Activated CD4-positive, alpha-beta T cell treated with anti-CD3 and anti-CD28 coated beads for 36 hours (primary cell): ENCODE measurements at regions of chr7 and their contacts with region 1.

Region 1: DNA sequence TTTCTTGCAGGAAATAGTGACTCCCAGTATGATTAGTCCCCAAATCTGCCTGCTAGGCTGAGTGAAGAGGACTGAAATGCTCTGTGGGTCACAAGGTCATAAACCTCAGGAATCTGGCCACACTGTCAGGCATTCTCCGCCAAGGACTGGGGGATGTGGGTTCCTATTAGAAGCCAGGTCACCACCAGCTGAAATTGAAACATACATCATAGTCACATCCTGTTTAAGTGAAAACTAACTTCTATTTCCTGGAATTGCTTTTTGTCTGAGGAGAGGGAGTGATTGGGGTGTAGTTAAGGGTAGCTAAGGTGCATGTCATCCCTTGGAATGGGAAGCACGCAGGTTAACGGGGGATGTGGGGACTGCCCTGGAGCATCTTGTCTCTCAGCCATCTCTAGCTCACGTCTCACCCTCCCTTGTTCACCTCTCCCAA is 11.9 kb upstream of the GSAP start:
- DNase-seq: peak; percentile 28
- ATAC-seq: peak; percentile 88
- H3K4me3 Mint-ChIP-seq: no peak overlapping the region
- H3K27ac Mint-ChIP-seq: peak overlapping the region; percentile 59
- H3K4me1 Mint-ChIP-seq: peaks cover 27% of the 10 kb centered on the region
- H3K27me3 Mint-ChIP-seq: peaks cover 2% of the 10 kb centered on the region

Region 2: DNA sequence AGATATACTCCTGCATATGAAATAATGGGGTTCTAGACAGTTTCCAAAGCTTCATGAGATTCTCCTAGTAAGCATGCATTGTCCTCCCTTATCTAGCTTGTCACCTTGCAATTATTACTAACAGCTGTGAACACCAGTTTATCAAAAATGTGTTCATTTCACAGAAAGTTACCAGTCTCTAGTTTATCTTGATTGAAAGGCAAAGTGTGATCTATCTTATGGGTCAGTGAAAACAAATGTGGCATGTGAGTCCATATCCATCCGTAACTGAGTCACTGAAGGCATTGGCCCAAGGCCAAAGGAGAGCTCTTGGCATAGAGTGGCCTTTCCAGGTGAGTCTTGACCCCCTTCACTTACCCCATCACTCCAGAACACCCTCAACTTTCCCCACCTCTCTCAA is 65.2 kb before region 1 on chr7:
- CTCF ChIA-PET with region 1: no interaction called
- POLR2A ChIA-PET with region 1: no interaction called
- intact Hi-C with region 1: no loop called
- DNase-seq: no peak
- ATAC-seq: no peak
- H3K4me3 Mint-ChIP-seq: no peak overlapping the region
- H3K27ac Mint-ChIP-seq: no peak overlapping the region
- H3K4me1 Mint-ChIP-seq: no peaks in the 10 kb centered on the region
- H3K27me3 Mint-ChIP-seq: no peaks in the 10 kb centered on the region

Region 3: DNA sequence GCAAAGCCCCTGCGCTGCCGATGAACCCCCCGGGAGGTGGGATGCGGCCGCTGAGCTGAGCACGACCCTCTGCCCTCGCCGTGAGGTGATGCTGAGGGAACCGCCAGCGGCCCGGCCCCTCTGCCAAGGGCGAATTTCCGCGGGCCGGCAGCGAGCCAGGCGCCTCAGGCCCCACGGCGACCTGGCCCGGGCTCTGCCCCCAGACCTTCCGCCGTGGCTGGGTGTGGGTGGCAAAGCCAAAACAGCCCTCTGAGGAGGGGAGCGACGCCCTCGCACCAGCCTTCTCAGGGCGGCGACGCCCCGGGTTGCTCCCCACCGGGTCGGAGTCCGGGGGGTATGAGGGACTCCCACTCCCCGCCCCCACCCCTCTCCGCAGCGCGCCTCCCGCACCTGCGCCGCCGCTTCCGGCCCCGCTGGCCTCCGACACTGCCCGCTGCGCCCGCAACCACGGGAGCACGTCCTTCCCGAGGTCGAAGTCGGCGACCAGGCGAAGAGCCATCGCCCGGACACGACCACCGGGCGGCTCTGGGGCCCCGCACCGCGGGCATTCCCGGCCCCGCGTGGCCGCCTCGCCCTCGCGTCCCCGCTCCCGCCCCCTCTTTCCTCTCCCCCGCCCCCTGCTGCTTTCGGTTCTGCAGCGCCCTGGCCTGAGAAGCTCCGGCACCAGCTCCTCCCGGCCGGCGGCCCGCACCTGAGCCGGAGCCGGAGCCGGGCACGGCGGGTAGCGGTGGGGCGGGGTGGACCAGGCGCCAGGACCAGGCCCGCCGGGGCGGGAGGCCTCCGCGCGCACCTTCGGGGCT is 12.0 kb before region 1 on chr7 and contains the start of gene GSAP:
- CTCF ChIA-PET with region 1: interaction called, 4 read pairs
- POLR2A ChIA-PET with region 1: interaction called, 3 read pairs
- intact Hi-C with region 1: loop called in 1 of 2 experiments (anchors 1 kb)
- DNase-seq: peak; percentile 62
- ATAC-seq: peak; percentile 46
- H3K4me3 Mint-ChIP-seq: peak within 1 kb of the TSS; percentile 52
- H3K27ac Mint-ChIP-seq: peak within 1 kb of the TSS; percentile 25
- H3K4me1 Mint-ChIP-seq: peaks cover 41% of the 10 kb centered on the region
- H3K27me3 Mint-ChIP-seq: peaks cover 10% of the 10 kb centered on the region
- total RNA-seq, gene GSAP: 1.1 to 1.4 TPM

Region 4: GRCh38 chr7:77531038-77531437 is 103.0 kb after region 1 on chr7:
- CTCF ChIA-PET with region 1: no interaction called
- POLR2A ChIA-PET with region 1: no interaction called
- intact Hi-C with region 1: no loop called
- DNase-seq: no peak
- ATAC-seq: no peak
- H3K4me3 Mint-ChIP-seq: no peak overlapping the region
- H3K27ac Mint-ChIP-seq: no peak overlapping the region
- H3K4me1 Mint-ChIP-seq: peaks cover 7% of the 10 kb centered on the region
- H3K27me3 Mint-ChIP-seq: no peaks in the 10 kb centered on the region

Region 5: DNA sequence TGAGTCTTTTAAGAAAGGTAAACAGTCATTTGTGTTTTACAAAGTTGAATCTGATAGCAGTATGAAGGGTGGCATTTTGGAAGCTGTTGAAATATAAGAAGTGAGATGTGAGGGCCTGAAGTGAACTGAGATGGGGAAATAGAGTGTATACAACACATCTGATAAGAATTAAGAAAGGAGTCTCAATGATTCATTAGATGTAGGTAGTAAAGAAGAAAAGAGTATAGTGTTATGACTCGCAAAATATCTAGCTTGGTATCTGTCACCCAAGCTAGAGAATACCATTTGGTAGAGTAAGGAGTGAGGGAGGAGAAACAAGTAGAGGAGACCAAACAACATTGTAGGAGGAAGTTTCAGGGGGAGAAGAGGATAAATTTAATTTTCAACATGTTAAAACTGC is 114.4 kb after region 1 on chr7:
- CTCF ChIA-PET with region 1: no interaction called
- POLR2A ChIA-PET with region 1: no interaction called
- intact Hi-C with region 1: no loop called
- DNase-seq: no peak
- ATAC-seq: peak; percentile 63
- H3K4me3 Mint-ChIP-seq: no peak overlapping the region
- H3K27ac Mint-ChIP-seq: no peak overlapping the region
- H3K4me1 Mint-ChIP-seq: peaks cover 31% of the 10 kb centered on the region
- H3K27me3 Mint-ChIP-seq: no peaks in the 10 kb centered on the region